ENCODE measurements at regions of chr17 and their contacts with region 1.

Region 1: GRCh38 chr17:2383628-2384167 is 17.2 kb downstream of the MNT start:
- DNase-seq: no peak
- ATAC-seq: no peak

Region 2: DNA sequence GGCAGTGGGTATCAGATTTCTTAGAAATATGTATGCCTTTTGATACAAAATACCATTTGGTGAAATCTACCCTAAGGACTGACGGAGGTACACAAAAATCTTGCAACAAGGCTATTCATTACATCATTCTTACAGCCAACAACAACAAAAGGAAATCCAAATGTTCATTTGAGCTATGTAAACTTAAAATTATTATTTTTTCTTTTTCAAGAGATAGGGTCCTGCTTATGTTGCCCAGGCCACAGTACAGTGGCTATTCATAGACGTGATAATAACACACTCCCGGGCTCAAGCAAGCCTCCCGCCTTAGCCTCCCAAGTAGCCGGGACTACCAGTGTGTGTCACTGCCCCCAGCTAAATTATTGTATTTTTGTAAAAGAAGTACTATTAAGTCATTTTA is 71.0 kb before region 1 on chr17:
- intact Hi-C with region 1: no loop called
- DNase-seq: no peak
- ATAC-seq: no peak

Region 3: GRCh38 chr17:2416010-2416734 is 32.5 kb after region 1 on chr17:
- intact Hi-C with region 1: loop called (anchors 2 kb)
- DNase-seq: peak; percentile 92
- ATAC-seq: peak; percentile 74

Region 4: DNA sequence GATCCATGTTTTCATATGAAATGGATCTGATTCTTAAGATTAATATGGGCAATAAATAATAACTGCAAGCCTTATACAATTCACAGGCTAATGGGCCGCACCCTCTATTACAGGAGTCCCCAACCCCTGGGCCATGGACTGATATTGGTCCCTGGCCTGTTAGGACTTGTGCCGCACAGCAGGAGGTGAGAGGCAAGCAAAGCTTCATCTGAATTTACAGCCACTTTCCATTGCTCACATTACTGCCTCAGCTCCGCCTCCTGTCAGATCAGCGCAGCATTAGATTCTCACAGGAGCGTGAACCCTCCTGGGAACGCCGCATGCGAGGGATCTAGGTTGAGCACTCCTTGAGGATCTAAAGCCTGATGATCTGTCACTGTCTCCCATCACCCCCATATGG is 101.2 kb after region 1 on chr17:
- intact Hi-C with region 1: no loop called
- DNase-seq: no peak
- ATAC-seq: peak; percentile 19